ENCODE measurements at regions of chr1 and their contacts with region 1.

Region 1: DNA sequence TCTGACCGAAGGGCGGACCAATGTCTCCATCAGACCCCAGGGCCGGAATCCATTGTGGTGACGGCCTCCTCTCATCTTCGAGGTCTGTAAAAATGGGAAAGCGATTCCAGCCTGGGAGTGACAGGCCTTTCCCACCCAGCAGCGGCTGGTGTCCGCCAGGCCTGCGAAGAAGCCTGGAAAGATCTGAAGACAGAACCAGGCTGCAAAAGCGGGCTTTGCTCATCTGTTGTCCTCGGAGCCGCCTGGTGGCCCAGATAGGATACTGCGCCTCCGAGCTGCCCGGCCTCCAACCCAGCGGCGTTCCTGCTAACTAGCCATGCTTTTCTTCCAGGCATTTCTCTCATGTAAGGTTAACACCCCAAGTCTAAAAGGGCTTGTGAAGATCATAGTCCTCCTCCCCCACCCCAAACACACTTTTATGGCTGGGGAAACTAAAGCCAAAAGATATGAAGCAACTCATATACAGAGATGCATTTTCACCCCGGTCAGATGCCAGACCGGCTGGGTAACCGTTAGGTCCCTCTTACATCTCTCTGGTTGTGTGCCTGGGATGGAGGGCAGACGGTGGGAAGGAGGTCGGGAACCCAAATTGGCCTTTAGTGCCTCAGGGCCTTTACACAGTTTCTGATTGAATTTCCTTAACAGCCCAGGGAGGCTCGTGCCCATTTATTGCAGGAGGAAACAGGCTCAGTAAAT is 1.9 kb upstream of the DHRS3 start:
- DNase-seq: peak; percentile 85
- H3K4me3 ChIP-seq: no peak overlapping the region
- H3K27ac ChIP-seq: peak overlapping the region; percentile 73
- H3K4me1 ChIP-seq: peaks cover 27% of the 10 kb centered on the region
- H3K27me3 ChIP-seq: no peaks in the 10 kb centered on the region
- CTCF ChIP-seq: peak; percentile 92 to 96
- POLR2A ChIP-seq: no peak

Region 2: GRCh38 chr1:12255918-12256317 is 364.0 kb before region 1 on chr1:
- CTCF ChIA-PET with region 1: no interaction called
- POLR2A ChIA-PET with region 1: no interaction called
- dilution Hi-C with region 1: no loop called
- intact Hi-C with region 1: no loop called
- DNase-seq: no peak
- H3K4me3 ChIP-seq: no peak overlapping the region
- H3K27ac ChIP-seq: no peak overlapping the region
- H3K4me1 ChIP-seq: no peaks in the 10 kb centered on the region
- H3K27me3 ChIP-seq: no peaks in the 10 kb centered on the region
- CTCF ChIP-seq: no peak
- POLR2A ChIP-seq: no peak

Region 3: GRCh38 chr1:12275369-12275768 is 344.6 kb before region 1 on chr1:
- CTCF ChIA-PET with region 1: interaction called, 30 read pairs
- POLR2A ChIA-PET with region 1: no interaction called
- dilution Hi-C with region 1: no loop called
- intact Hi-C with region 1: loop called (anchors 1 kb)
- DNase-seq: peak; percentile 20
- H3K4me3 ChIP-seq: no peak overlapping the region
- H3K27ac ChIP-seq: no peak overlapping the region
- H3K4me1 ChIP-seq: no peaks in the 10 kb centered on the region
- H3K27me3 ChIP-seq: no peaks in the 10 kb centered on the region
- CTCF ChIP-seq: peak; percentile 69 to 73
- POLR2A ChIP-seq: no peak

Region 4: DNA sequence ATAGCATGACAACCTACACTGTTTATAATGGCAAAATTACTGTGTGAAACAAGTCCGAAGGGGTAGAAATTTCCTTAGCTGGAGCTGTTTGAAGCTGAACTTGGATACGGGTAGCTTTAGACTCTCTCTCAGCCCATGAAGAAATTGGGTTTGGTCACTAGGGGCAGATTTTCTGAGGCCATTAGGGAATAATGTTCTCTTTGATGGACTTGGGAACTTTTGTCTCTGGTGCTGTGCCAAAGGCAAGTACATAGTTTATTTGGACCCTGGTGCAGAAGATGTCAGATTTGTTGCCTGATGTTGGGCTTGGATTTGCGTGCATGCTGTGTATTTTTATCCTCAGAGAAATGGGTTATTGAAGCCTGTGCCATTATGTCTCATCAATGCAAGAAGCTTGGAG is 280.5 kb before region 1 on chr1:
- CTCF ChIA-PET with region 1: interaction called, 13 read pairs
- POLR2A ChIA-PET with region 1: no interaction called
- dilution Hi-C with region 1: no loop called
- intact Hi-C with region 1: no loop called
- DNase-seq: no peak
- H3K4me3 ChIP-seq: no peak overlapping the region
- H3K27ac ChIP-seq: no peak overlapping the region
- H3K4me1 ChIP-seq: no peaks in the 10 kb centered on the region
- H3K27me3 ChIP-seq: no peaks in the 10 kb centered on the region
- CTCF ChIP-seq: peak in 1 of 2 donors; percentile 8
- POLR2A ChIP-seq: no peak

Region 5: GRCh38 chr1:12454406-12455391 is 165.2 kb before region 1 on chr1:
- CTCF ChIA-PET with region 1: interaction called, 3 read pairs
- POLR2A ChIA-PET with region 1: interaction called, 3 read pairs
- dilution Hi-C with region 1: no loop called
- intact Hi-C with region 1: loop called (anchors 1 kb)
- DNase-seq: peak; percentile 81
- H3K4me3 ChIP-seq: peak overlapping the region in 1 of 3 experiments; percentile 6
- H3K27ac ChIP-seq: peak overlapping the region; percentile 88
- H3K4me1 ChIP-seq: peaks cover 62% of the 10 kb centered on the region
- H3K27me3 ChIP-seq: no peaks in the 10 kb centered on the region
- CTCF ChIP-seq: no peak
- POLR2A ChIP-seq: no peak

Region 6: GRCh38 chr1:12539705-12540579 is 80.0 kb before region 1 on chr1:
- CTCF ChIA-PET with region 1: interaction called, 15 read pairs
- POLR2A ChIA-PET with region 1: no interaction called
- dilution Hi-C with region 1: no loop called
- intact Hi-C with region 1: loop called (anchors 1 kb)
- DNase-seq: peak; percentile 70
- H3K4me3 ChIP-seq: no peak overlapping the region
- H3K27ac ChIP-seq: no peak overlapping the region
- H3K4me1 ChIP-seq: peaks cover 21% of the 10 kb centered on the region
- H3K27me3 ChIP-seq: no peaks in the 10 kb centered on the region
- CTCF ChIP-seq: no peak
- POLR2A ChIP-seq: no peak

Region 7: GRCh38 chr1:12604114-12604874 is 15.6 kb before region 1 on chr1:
- CTCF ChIA-PET with region 1: interaction called, 112 read pairs
- POLR2A ChIA-PET with region 1: interaction called, 21 read pairs
- dilution Hi-C with region 1: no loop called
- intact Hi-C with region 1: loop called (anchors 1 kb)
- DNase-seq: peak; percentile 99
- H3K4me3 ChIP-seq: peak overlapping the region in 1 of 3 experiments; percentile 15
- H3K27ac ChIP-seq: peak overlapping the region; percentile 95
- H3K4me1 ChIP-seq: peaks cover 38% of the 10 kb centered on the region
- H3K27me3 ChIP-seq: no peaks in the 10 kb centered on the region
- CTCF ChIP-seq: no peak
- POLR2A ChIP-seq: peak; percentile 38

Region 8: GRCh38 chr1:12709091-12709491 is 89.2 kb after region 1 on chr1:
- CTCF ChIA-PET with region 1: no interaction called
- POLR2A ChIA-PET with region 1: no interaction called
- dilution Hi-C with region 1: no loop called
- intact Hi-C with region 1: no loop called
- DNase-seq: no peak
- H3K4me3 ChIP-seq: no peak overlapping the region
- H3K27ac ChIP-seq: no peak overlapping the region
- H3K4me1 ChIP-seq: no peaks in the 10 kb centered on the region
- H3K27me3 ChIP-seq: no peaks in the 10 kb centered on the region
- CTCF ChIP-seq: no peak
- POLR2A ChIP-seq: no peak

Measured in endothelial cell of umbilical vein (primary cell).